ENCODE measurements at regions of chr6 and their contacts with region 1.

Region 1: GRCh38 chr6:106325336-106326178 is at the start of gene ATG5:
- DNase-seq: peak; percentile 98 to 100 (median 100)
- ATAC-seq: peak; percentile 92
- H3K4me3 ChIP-seq: peak within 1 kb of the TSS; percentile 92
- H3K4me3 Mint-ChIP-seq: peak within 1 kb of the TSS; percentile 99
- H3K27ac ChIP-seq: peak within 1 kb of the TSS; percentile 85 to 91
- H3K27ac Mint-ChIP-seq: peak within 1 kb of the TSS; percentile 96
- H3K4me1 ChIP-seq: peaks cover 22% of the 10 kb centered on the region
- H3K4me1 Mint-ChIP-seq: peaks cover 50% of the 10 kb centered on the region
- H3K27me3 ChIP-seq: peaks cover 0 to 12% of the 10 kb centered on the region in 2 experiments
- H3K27me3 Mint-ChIP-seq: peaks cover 19% of the 10 kb centered on the region
- CTCF ChIP-seq: no peak
- total RNA-seq, gene ATG5: 19.4 to 23.2 TPM

Region 2: DNA sequence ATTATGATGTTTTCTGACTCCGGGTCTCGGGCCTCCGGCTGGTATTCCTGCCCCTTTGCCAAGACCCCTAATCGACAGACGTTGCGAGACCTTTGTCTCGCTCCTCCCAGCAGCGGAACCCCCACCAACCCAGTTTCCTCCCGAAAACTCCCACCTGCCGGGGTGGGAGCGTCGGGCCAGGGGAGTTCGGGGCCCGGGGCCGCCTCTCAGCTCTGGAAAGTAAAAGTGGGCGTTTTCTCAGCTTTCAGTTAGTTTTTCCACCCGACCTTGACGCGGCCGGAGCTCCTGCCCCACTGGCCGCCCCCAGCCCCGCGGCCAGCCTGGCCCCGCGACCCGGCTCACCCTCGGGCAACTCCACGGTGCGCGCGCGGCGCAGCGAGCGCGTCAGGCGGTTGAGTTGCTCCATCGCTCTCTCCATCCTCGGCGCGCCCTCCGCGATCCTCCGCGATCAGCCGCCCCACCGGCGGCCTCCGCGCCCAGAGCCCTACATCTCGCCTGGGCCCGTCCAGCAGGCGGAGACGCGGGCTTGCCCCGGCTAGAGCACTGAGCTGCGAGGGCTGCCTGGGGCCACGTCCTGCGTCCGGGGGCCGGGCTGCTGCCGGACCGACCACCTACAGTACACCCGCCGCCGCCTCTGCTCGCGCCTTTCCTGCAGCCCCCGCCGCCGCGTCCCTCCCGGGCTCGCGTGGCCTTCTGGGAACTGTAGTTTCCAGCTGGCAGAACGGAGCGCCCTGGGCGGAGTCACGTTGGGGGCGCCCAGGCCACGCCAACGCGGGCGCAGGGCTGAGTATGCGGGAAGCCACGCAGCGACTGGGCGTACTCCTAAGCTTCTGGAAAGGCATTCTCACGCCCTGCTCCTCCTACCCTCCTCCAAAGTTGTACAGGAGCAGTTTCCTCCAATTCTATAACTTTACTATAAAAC is 1466.1 kb before region 1 on chr6 and contains the start of gene HACE1:
- CTCF ChIA-PET with region 1: no interaction called
- POLR2A ChIA-PET with region 1: interaction called, 6 read pairs
- intact Hi-C with region 1: loop called in 1 of 2 experiments (anchors 5 kb)
- DNase-seq: peak; percentile 76 to 91 (median 84)
- ATAC-seq: peak; percentile 98
- H3K4me3 ChIP-seq: peak within 1 kb of the TSS; percentile 80
- H3K4me3 Mint-ChIP-seq: peak within 1 kb of the TSS; percentile 96
- H3K27ac ChIP-seq: peak within 1 kb of the TSS in 1 of 2 donors; percentile 7
- H3K27ac Mint-ChIP-seq: peak within 1 kb of the TSS; percentile 70
- H3K4me1 ChIP-seq: peaks cover 12% of the 10 kb centered on the region
- H3K4me1 Mint-ChIP-seq: peaks cover 18% of the 10 kb centered on the region
- H3K27me3 ChIP-seq: no peaks in the 10 kb centered on the region
- H3K27me3 Mint-ChIP-seq: peaks cover 15% of the 10 kb centered on the region
- CTCF ChIP-seq: peak; percentile 17
- total RNA-seq, gene HACE1: 7.4 to 8.2 TPM

Region 3: DNA sequence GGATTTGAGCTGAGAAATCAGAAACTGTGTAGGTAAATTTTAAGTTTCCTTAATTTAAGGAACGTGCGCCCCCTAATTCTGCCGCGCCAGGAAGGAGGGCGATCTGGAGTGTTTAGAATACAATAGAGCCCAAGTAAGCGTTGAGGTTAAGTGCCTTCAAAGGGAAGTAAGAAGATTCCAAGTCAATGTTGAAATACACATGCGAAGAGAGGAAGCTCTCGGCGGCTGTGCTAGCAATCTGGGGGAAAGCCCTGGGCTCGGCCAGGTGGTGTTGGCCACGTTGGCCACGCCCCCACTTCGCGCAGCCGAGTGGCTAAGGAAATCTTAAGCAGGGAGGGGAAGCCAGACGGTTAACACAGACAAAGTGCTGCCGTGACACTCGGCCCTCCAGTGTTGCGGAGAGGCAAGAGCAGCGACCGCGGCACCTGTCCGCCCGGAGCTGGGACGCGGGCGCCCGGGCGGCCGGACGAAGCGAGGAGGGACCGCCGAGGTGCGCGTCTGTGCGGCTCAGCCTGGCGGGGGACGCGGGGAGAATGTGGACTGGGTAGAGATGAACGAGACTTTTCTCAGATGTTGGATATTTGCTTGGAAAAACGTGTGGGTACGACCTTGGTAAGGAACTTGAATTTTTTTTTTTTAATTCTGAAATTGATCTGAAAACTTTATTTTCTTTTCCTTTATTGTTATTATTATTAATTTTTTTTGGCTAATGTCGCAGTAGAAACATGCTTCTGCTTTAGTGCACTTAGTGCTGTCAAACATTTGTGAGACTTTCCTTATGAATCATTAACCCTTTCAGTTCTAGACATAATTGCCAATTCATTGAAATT is 239.4 kb before region 1 on chr6 and contains the start of gene PRDM1:
- CTCF ChIA-PET with region 1: no interaction called
- POLR2A ChIA-PET with region 1: no interaction called
- intact Hi-C with region 1: loop called in 1 of 2 experiments (anchors 5 kb)
- DNase-seq: peak; percentile 53 to 96 (median 68)
- ATAC-seq: peak; percentile 83
- H3K4me3 ChIP-seq: peak within 1 kb of the TSS; percentile 62
- H3K4me3 Mint-ChIP-seq: peak within 1 kb of the TSS; percentile 94
- H3K27ac ChIP-seq: peak within 1 kb of the TSS in 1 of 2 donors; percentile 49
- H3K27ac Mint-ChIP-seq: peak within 1 kb of the TSS; percentile 74
- H3K4me1 ChIP-seq: peaks cover 58% of the 10 kb centered on the region
- H3K4me1 Mint-ChIP-seq: peaks cover 80% of the 10 kb centered on the region
- H3K27me3 ChIP-seq: peaks cover 0 to 8% of the 10 kb centered on the region in 2 experiments
- H3K27me3 Mint-ChIP-seq: peaks cover 55% of the 10 kb centered on the region
- CTCF ChIP-seq: peak; percentile 14
- total RNA-seq, gene PRDM1: 69.9 to 83.4 TPM

Region 4: DNA sequence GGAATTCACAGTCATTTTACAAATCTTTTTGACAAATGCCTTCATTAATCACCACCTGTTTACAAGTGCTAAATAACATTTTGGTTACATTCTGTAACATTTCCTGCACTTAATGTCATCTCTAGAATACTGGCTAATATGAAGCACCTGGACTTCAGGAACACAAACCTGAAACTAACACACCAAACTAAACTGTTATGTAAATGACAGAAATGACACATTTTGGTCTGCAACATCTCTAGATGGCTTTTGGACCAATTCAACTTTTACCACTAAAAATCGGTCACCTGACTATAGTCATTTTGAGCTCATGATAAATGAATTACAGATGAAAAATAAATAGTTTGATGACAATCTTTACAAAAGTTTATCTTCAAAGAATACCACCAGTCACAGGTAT is 80.6 kb before region 1 on chr6:
- CTCF ChIA-PET with region 1: no interaction called
- POLR2A ChIA-PET with region 1: no interaction called
- intact Hi-C with region 1: no loop called
- DNase-seq: no peak
- ATAC-seq: no peak
- H3K4me3 ChIP-seq: no peak overlapping the region
- H3K4me3 Mint-ChIP-seq: no peak overlapping the region
- H3K27ac ChIP-seq: no peak overlapping the region
- H3K27ac Mint-ChIP-seq: no peak overlapping the region
- H3K4me1 ChIP-seq: no peaks in the 10 kb centered on the region
- H3K4me1 Mint-ChIP-seq: no peaks in the 10 kb centered on the region
- H3K27me3 ChIP-seq: no peaks in the 10 kb centered on the region
- H3K27me3 Mint-ChIP-seq: no peaks in the 10 kb centered on the region
- CTCF ChIP-seq: no peak

Region 5: GRCh38 chr6:106629103-106629858 is 303.7 kb after region 1 on chr6 and contains the starts of genes QRSL1 and RTN4IP1:
- CTCF ChIA-PET with region 1: no interaction called
- POLR2A ChIA-PET with region 1: no interaction called
- intact Hi-C with region 1: loop called in 1 of 2 experiments (anchors 5 kb)
- DNase-seq: peak; percentile 67 to 95 (median 78)
- ATAC-seq: peak; percentile 94
- H3K4me3 ChIP-seq: peak within 1 kb of the TSS; percentile 79
- H3K4me3 Mint-ChIP-seq: peak within 1 kb of the TSS; percentile 97
- H3K27ac ChIP-seq: peak within 1 kb of the TSS; percentile 64 to 83
- H3K27ac Mint-ChIP-seq: peak within 1 kb of the TSS; percentile 96
- H3K4me1 ChIP-seq: peaks cover 15% of the 10 kb centered on the region
- H3K4me1 Mint-ChIP-seq: peaks cover 42% of the 10 kb centered on the region
- H3K27me3 ChIP-seq: no peaks in the 10 kb centered on the region
- H3K27me3 Mint-ChIP-seq: no peaks in the 10 kb centered on the region
- CTCF ChIP-seq: no peak
- total RNA-seq, gene QRSL1: 7.3 to 9.3 TPM
- total RNA-seq, gene RTN4IP1: 2.4 to 2.5 TPM

Region 6: GRCh38 chr6:107459283-107460082 is 1133.9 kb after region 1 on chr6 and contains the start of gene PDSS2:
- CTCF ChIA-PET with region 1: no interaction called
- POLR2A ChIA-PET with region 1: no interaction called
- intact Hi-C with region 1: loop called in 1 of 2 experiments (anchors 5 kb)
- DNase-seq: peak; percentile 89 to 98 (median 96)
- ATAC-seq: peak; percentile 96
- H3K4me3 ChIP-seq: peak within 1 kb of the TSS; percentile 91
- H3K4me3 Mint-ChIP-seq: peak within 1 kb of the TSS; percentile 94
- H3K27ac ChIP-seq: peak within 1 kb of the TSS; percentile 71 to 79
- H3K27ac Mint-ChIP-seq: peak within 1 kb of the TSS; percentile 97
- H3K4me1 ChIP-seq: peaks cover 16% of the 10 kb centered on the region
- H3K4me1 Mint-ChIP-seq: peaks cover 23% of the 10 kb centered on the region
- H3K27me3 ChIP-seq: no peaks in the 10 kb centered on the region
- H3K27me3 Mint-ChIP-seq: no peaks in the 10 kb centered on the region
- CTCF ChIP-seq: no peak
- total RNA-seq, gene PDSS2: 5.8 to 6.6 TPM